Activated CD4-positive, alpha-beta T cell treated with anti-CD3 and anti-CD28 coated beads for 36 hours (primary cell): ENCODE measurements at regions of chr1 and their contacts with region 1.

Region 1: GRCh38 chr1:225911191-225912130 is 12.6 kb downstream of the PYCR2 start:
- DNase-seq: peak; percentile 85
- ATAC-seq: peak; percentile 92
- H3K4me3 Mint-ChIP-seq: no peak overlapping the region
- H3K27ac Mint-ChIP-seq: no peak overlapping the region
- H3K4me1 Mint-ChIP-seq: peaks cover 18% of the 10 kb centered on the region
- H3K27me3 Mint-ChIP-seq: no peaks in the 10 kb centered on the region

Region 2: GRCh38 chr1:225554216-225554812 is 357.1 kb before region 1 on chr1:
- CTCF ChIA-PET with region 1: no interaction called
- POLR2A ChIA-PET with region 1: no interaction called
- intact Hi-C with region 1: loop called (anchors 1 kb)
- DNase-seq: no peak
- ATAC-seq: no peak
- H3K4me3 Mint-ChIP-seq: no peak overlapping the region
- H3K27ac Mint-ChIP-seq: no peak overlapping the region
- H3K4me1 Mint-ChIP-seq: no peaks in the 10 kb centered on the region
- H3K27me3 Mint-ChIP-seq: no peaks in the 10 kb centered on the region

Region 3: GRCh38 chr1:225652729-225653462 is 258.6 kb before region 1 on chr1 and contains the start of gene ENAH:
- CTCF ChIA-PET with region 1: interaction called, 3 read pairs
- POLR2A ChIA-PET with region 1: no interaction called
- intact Hi-C with region 1: loop called in 1 of 2 experiments (anchors 2 kb)
- DNase-seq: peak; percentile 65
- ATAC-seq: peak; percentile 69
- H3K4me3 Mint-ChIP-seq: peak within 1 kb of the TSS; percentile 75
- H3K27ac Mint-ChIP-seq: peak within 1 kb of the TSS; percentile 15
- H3K4me1 Mint-ChIP-seq: peaks cover 12% of the 10 kb centered on the region
- H3K27me3 Mint-ChIP-seq: peaks cover 31% of the 10 kb centered on the region
- total RNA-seq, gene ENAH: 0.62 to 0.81 TPM

Region 4: GRCh38 chr1:225881969-225882693 is 29.3 kb before region 1 on chr1 and contains the start of gene TMEM63A:
- CTCF ChIA-PET with region 1: interaction called, 14 read pairs
- POLR2A ChIA-PET with region 1: interaction called, 4 read pairs
- intact Hi-C with region 1: loop called in 1 of 2 experiments (anchors 5 kb)
- DNase-seq: peak; percentile 92
- ATAC-seq: peak; percentile 55
- H3K4me3 Mint-ChIP-seq: peak within 1 kb of the TSS; percentile 89
- H3K27ac Mint-ChIP-seq: peak within 1 kb of the TSS; percentile 91
- H3K4me1 Mint-ChIP-seq: peaks cover 50% of the 10 kb centered on the region
- H3K27me3 Mint-ChIP-seq: no peaks in the 10 kb centered on the region
- total RNA-seq, gene TMEM63A: 47.3 to 48.0 TPM

Region 5: DNA sequence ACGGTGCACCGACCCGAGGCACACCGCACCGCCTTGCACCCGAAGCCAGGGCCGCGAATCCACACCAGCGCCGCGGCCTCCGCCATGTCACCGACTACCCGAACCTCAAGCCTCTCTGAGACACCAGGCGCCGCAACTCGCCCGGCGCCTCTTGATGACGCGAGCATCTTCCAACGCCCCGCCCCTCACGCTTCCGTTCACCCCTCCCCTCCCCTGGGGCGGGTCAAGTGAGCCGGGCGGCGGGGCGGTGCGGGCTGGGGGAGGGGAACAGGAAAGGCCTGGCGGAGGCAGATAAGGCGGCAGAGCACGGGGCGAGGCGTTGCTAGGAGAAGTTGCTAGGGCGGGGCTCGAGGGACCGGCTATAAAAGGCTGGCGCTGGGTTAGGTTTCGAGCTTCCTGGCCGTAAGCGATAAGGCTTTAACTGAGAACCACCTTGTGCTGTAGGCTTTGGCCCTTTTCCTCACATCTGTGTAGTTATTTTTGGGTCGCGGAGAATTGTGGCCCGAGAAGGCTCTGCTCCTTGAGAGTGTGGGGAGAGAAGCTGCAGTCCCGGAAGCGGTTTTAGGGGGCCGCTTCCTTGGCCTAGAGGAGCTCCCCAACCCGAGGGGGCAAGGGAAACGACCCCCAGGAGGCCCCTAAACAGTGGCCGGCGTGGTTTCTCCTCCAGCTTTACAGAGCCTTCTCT is 87.9 kb after region 1 on chr1 and contains the start of gene SDE2:
- CTCF ChIA-PET with region 1: no interaction called
- POLR2A ChIA-PET with region 1: no interaction called
- intact Hi-C with region 1: no loop called
- DNase-seq: peak; percentile 100
- ATAC-seq: peak; percentile 90
- H3K4me3 Mint-ChIP-seq: peak within 1 kb of the TSS; percentile 89
- H3K27ac Mint-ChIP-seq: peak within 1 kb of the TSS; percentile 100
- H3K4me1 Mint-ChIP-seq: peaks cover 69% of the 10 kb centered on the region
- H3K27me3 Mint-ChIP-seq: no peaks in the 10 kb centered on the region
- total RNA-seq, gene SDE2: 13.5 to 15.0 TPM